ENCODE measurements at regions of chr17 and their contacts with region 1.

Region 1: GRCh38 chr17:27332485-27333409 is 38.8 kb downstream of the WSB1 start:
- DNase-seq: peak; percentile 99
- ATAC-seq: peak; percentile 94 to 99 (median 97)
- H3K4me3 ChIP-seq: peak overlapping the region in 9 of 10 donors; percentile 23 to 62 (median 55)
- H3K27ac ChIP-seq: peak overlapping the region; percentile 87 to 99 (median 93)
- H3K4me1 ChIP-seq: peaks cover 3 to 37% (median 24%) of the 10 kb centered on the region in 9 donors
- H3K27me3 ChIP-seq: no peaks in the 10 kb centered on the region
- CTCF ChIP-seq: peak; percentile 81 to 99 (median 94)

Region 2: DNA sequence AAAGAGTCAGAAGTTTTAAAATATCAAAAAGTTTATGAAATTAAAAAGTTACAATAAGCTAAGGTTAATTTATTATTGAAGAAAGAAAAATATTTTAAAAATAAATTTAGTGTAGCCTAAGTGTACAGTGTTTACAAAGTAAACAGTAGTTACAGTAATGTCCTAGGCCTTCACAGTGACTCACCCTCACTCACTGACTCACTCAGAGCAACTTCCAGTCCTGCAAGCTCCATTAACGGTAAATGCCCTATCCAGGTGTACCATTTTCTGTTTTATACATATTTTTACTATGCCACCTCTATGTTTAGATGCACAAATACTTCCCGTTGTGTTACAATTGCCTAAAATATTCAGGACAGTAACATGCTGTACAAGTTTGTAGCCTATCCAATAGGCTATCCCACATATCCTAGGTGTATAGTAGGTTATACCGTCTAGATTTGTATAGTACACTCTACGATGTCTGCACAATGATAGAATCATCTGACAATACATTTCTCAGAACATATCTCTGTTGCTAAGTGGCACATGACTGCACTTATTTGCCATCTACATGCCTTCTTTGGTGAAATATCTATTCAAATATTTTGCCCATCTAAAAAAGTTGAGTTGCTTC is 106.0 kb before region 1 on chr17:
- intact Hi-C with region 1: no loop called
- DNase-seq: no peak
- ATAC-seq: no peak
- H3K4me3 ChIP-seq: no peak overlapping the region
- H3K27ac ChIP-seq: no peak overlapping the region
- H3K4me1 ChIP-seq: no peaks in the 10 kb centered on the region
- H3K27me3 ChIP-seq: peaks cover 0 to 10% (median 0%) of the 10 kb centered on the region in 7 donors
- CTCF ChIP-seq: no peak

Region 3: GRCh38 chr17:27236717-27237315 is 95.9 kb before region 1 on chr17:
- intact Hi-C with region 1: loop called in 4 of 10 experiments (anchors 1 to 2 kb)
- DNase-seq: peak in 1 of 2 donors; percentile 80
- ATAC-seq: peak in 7 of 8 donors; percentile 61 to 79 (median 77)
- H3K4me3 ChIP-seq: no peak overlapping the region
- H3K27ac ChIP-seq: no peak overlapping the region
- H3K4me1 ChIP-seq: peaks cover 0 to 54% (median 3%) of the 10 kb centered on the region in 9 donors
- H3K27me3 ChIP-seq: no peaks in the 10 kb centered on the region
- CTCF ChIP-seq: peak; percentile 84 to 97 (median 94)

Region 4: GRCh38 chr17:27293898-27294688 is 38.7 kb before region 1 on chr17 and contains the start of gene WSB1:
- intact Hi-C with region 1: loop called in 8 of 10 experiments (anchors 2 to 5 kb)
- DNase-seq: peak; percentile 93 to 95
- ATAC-seq: peak; percentile 96 to 98 (median 98)
- H3K4me3 ChIP-seq: peak within 1 kb of the TSS; percentile 77 to 98 (median 92)
- H3K27ac ChIP-seq: peak within 1 kb of the TSS; percentile 87 to 100 (median 100)
- H3K4me1 ChIP-seq: peaks cover 3 to 45% (median 36%) of the 10 kb centered on the region in 9 donors
- H3K27me3 ChIP-seq: no peaks in the 10 kb centered on the region
- CTCF ChIP-seq: peak in 1 of 9 donors; percentile 12
- total RNA-seq, gene WSB1: 50.0 to 94.2 (median 60.5) TPM

Measured in heart right ventricle (tissue), 16 donors.